GM12878 (cell line): ENCODE measurements at regions of chr7 and their contacts with region 1.

Region 1: DNA sequence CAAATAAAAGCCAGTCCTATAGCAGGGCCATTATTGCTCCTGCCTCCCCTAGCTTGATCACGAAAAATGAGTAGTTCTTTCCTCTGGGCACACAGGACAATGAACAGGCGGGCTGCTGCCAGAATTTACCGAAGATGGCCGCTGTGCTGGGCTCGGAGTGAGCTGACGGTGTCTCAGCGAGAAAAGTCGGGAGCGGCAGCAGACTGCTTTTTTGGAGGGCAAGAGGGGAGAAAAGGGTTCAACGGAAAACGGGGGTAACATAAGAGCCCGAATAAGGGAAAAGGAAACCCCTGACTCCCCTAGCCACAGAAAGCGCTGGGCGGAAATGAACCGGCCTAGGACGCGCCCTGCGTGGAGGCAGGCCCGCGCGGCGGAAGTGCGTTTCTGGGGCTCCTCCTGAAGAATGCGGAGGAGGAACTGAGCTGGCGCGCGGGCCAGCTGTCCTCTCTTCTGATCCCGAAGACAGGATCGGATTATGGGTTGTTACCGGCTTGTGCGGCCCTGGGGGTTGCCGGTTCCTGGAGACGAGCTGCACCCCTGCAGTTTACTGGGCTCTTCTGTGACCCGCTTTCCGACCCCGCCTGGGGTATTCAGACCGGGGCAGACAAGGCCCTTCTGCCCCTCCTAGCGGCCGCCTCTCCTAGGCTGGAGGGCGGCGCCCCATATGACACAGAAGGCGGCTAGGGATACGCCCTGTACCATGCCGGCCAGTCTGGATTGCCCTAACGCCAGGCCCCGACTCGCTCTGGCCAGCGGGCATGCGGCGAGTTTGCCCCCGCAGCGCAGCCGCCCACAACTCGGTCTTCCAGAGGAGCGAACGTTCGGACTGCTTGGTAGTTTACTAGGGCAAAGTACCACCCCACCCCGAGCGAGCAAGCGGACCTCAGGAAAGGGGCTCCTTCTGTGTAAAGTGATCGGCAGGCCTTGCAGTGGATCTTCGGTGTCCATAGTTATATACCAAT is 30.1 kb upstream of the KMT2E start:
- DNase-seq: peak; percentile 42
- ATAC-seq: peak; percentile 96
- H3K4me3 ChIP-seq: peak overlapping the region; percentile 75
- H3K27ac ChIP-seq: peak overlapping the region; percentile 98
- H3K4me1 ChIP-seq: peaks cover 14% of the 10 kb centered on the region; the same call in 1 of the 2 replicates
- H3K27me3 ChIP-seq: no peaks in the 10 kb centered on the region
- CTCF ChIP-seq: peak; percentile 36 to 61 (median 50); a peak in 5 of 6 replicates
- EP300 ChIP-seq: 0 out of 4 replicates have a peak, but pooled peaks of 1 of the 2 experiments have one; percentile 24
- POLR2A ChIP-seq: peak; percentile 90
- RAD21 ChIP-seq: peak; percentile 37; the same call in 1 of the 2 replicates

Region 2: GRCh38 chr7:104943502-104944343 is 40.1 kb before region 1 on chr7:
- CTCF ChIA-PET with region 1: interaction called, 63 read pairs
- POLR2A ChIA-PET with region 1: interaction called, 5 read pairs
- RAD21 ChIA-PET with region 1: interaction called, 57 read pairs
- SMC1A ChIA-PET with region 1: interaction called, 116 read pairs
- in situ Hi-C with region 1: no loop called
- intact Hi-C with region 1: loop called (anchors 2 kb)
- DNase-seq: peak; percentile 83
- ATAC-seq: peak; percentile 75
- H3K4me3 ChIP-seq: peak overlapping the region; percentile 39; the same call in 1 of the 2 replicates
- H3K27ac ChIP-seq: peak overlapping the region; percentile 93
- H3K4me1 ChIP-seq: peaks cover 39% of the 10 kb centered on the region
- H3K27me3 ChIP-seq: no peaks in the 10 kb centered on the region
- CTCF ChIP-seq: no peak
- EP300 ChIP-seq: peak; percentile 90 to 91
- POLR2A ChIP-seq: peak; percentile 55
- RAD21 ChIP-seq: no peak

Region 3: DNA sequence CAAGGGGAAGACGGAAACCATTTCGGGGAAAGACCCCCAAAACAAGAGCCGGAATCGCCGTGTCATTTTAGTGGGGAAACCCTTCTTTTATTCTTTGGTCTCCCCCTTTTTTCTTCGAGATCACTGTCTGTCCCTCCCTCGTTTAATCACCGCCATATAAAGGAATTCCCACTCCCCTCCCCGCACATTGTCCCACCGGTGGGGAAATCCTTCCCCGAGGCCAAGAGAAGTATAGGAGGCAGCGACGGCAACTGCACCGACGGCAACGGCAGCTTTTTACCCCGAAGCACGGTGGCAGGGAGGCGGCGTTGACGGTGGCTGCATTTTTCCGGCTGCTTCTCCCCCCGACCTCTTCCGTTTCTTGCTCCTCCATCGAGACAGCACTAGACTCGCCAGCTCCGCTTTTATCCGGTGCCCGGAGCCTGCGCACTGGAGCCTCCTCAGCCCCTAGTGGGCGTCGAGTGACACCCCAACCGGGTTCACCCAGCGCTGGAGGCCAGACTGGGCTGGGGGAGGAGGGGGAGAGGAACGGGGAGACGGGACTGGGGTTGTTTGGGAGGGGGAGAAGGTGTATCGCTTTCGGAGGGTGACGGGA is 29.5 kb after region 1 on chr7:
- CTCF ChIA-PET with region 1: interaction called, 66 read pairs
- POLR2A ChIA-PET with region 1: interaction called, 83 read pairs
- RAD21 ChIA-PET with region 1: interaction called, 112 read pairs
- SMC1A ChIA-PET with region 1: interaction called, 270 read pairs
- in situ Hi-C with region 1: no loop called
- intact Hi-C with region 1: loop called (anchors 1 kb)
- DNase-seq: peak; percentile 66
- ATAC-seq: peak; percentile 62
- H3K4me3 ChIP-seq: peak overlapping the region; percentile 100
- H3K27ac ChIP-seq: peak overlapping the region; percentile 100
- H3K4me1 ChIP-seq: peaks cover 4% of the 10 kb centered on the region
- H3K27me3 ChIP-seq: no peaks in the 10 kb centered on the region
- CTCF ChIP-seq: peak; percentile 45 to 69 (median 67)
- EP300 ChIP-seq: no peak; a peak in 1 of 4 replicates
- POLR2A ChIP-seq: peak; percentile 85
- RAD21 ChIP-seq: peak; percentile 8; the same call in 1 of the 2 replicates

Region 4: GRCh38 chr7:105060437-105060836 is 76.6 kb after region 1 on chr7:
- CTCF ChIA-PET with region 1: interaction called, 14 read pairs
- POLR2A ChIA-PET with region 1: no interaction called
- RAD21 ChIA-PET with region 1: interaction called, 4 read pairs
- SMC1A ChIA-PET with region 1: interaction called, 16 read pairs
- in situ Hi-C with region 1: no loop called
- intact Hi-C with region 1: no loop called
- DNase-seq: no peak
- ATAC-seq: no peak; the same call in 2 of the 3 replicates
- H3K4me3 ChIP-seq: no peak overlapping the region
- H3K27ac ChIP-seq: no peak overlapping the region
- H3K4me1 ChIP-seq: no peaks in the 10 kb centered on the region
- H3K27me3 ChIP-seq: no peaks in the 10 kb centered on the region
- CTCF ChIP-seq: no peak
- EP300 ChIP-seq: no peak
- POLR2A ChIP-seq: no peak
- RAD21 ChIP-seq: no peak

Region 5: DNA sequence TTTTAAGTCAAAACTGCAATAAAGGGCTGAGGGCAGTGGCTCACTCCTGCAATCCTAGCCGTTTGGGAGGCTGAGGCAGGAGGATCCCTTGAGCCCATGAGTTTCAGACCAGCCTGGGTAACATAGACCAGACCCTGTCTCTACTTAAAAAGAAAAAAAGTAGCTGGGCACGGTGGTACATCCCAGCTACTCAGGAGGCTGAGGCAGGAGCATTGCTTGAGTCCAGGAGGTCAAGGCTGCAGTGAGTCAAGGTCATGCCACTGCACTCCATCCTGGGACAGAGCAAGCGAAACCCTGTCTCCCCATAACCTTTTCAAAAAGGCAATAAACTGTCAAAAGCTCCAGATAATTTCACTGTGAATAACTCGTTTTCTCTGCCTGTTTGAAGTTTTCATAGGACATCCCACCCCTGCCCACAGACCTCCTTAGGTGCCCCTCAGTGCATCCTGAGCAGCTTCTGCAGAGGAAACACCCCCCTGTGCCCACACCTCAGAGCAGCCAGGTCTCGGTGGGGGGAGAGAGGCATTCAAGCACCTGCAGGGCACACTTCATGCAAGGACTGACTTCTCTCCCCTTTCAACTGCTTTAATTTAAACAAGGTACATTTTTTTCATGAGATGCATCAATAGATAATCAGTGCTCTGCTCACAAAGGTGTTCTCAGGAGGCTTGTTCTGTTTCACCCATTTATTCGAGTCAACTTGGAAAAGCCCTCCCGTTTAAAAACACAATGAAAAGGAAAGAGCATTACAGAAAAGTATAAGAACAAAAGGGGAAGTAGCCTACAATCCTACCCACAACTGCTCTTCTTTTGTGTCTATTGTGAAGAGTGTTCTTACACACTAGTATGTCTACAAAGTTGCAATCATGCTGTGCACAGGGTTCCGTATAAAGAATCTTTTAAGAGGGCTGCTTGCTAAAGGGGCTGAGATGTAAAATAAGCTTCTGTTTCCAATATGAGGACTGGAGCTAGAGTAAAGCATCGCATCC is 135.0 kb after region 1 on chr7:
- CTCF ChIA-PET with region 1: interaction called, 3 read pairs
- POLR2A ChIA-PET with region 1: no interaction called
- RAD21 ChIA-PET with region 1: interaction called, 8 read pairs
- SMC1A ChIA-PET with region 1: interaction called, 17 read pairs
- in situ Hi-C with region 1: no loop called
- intact Hi-C with region 1: no loop called
- DNase-seq: no peak
- ATAC-seq: peak; percentile 84
- H3K4me3 ChIP-seq: no peak overlapping the region
- H3K27ac ChIP-seq: 0 out of 2 replicates have a peak overlapping the region, but pooled peaks have one; percentile 4
- H3K4me1 ChIP-seq: peaks cover 9% of the 10 kb centered on the region
- H3K27me3 ChIP-seq: no peaks in the 10 kb centered on the region
- CTCF ChIP-seq: no peak
- EP300 ChIP-seq: no peak
- POLR2A ChIP-seq: no peak
- RAD21 ChIP-seq: no peak

Region 6: DNA sequence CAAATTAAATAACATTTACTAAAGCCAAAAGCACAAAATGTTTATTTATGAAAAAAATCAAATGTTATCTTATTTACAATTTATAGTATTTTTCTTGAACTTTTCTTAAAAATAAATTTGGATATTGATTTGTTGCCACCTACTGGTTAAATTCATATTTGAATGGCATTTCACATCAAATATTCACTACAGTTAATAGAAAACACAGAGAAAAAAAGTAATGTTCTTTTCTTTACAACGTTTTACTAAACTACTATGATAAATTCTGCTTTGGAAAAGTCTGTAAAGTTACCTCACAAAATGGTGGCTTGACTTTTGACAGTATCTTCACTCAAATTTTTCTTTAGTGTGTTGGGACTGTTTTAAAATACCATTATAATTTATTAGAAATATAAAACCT is 352.1 kb after region 1 on chr7:
- CTCF ChIA-PET with region 1: interaction called, 13 read pairs
- POLR2A ChIA-PET with region 1: no interaction called
- RAD21 ChIA-PET with region 1: interaction called, 6 read pairs
- SMC1A ChIA-PET with region 1: interaction called, 3 read pairs
- in situ Hi-C with region 1: no loop called
- intact Hi-C with region 1: loop called (anchors 2 kb)
- DNase-seq: no peak
- ATAC-seq: no peak
- H3K4me3 ChIP-seq: no peak overlapping the region
- H3K27ac ChIP-seq: no peak overlapping the region
- H3K4me1 ChIP-seq: no peaks in the 10 kb centered on the region
- H3K27me3 ChIP-seq: no peaks in the 10 kb centered on the region
- CTCF ChIP-seq: peak in 2 of 3 experiments; percentile 26 to 49; a peak in 2 of 6 replicates
- EP300 ChIP-seq: no peak
- POLR2A ChIP-seq: no peak
- RAD21 ChIP-seq: peak; percentile 26; the same call in 1 of the 2 replicates